HEK293 (cell line): ENCODE measurements at regions of chr2 and their contacts with region 1.

Region 1: GRCh38 chr2:96554293-96555145 is 18.0 kb downstream of the ARID5A start:
- H3K4me3 ChIP-seq: no peak overlapping the region
- H3K27ac ChIP-seq: no peak overlapping the region
- H3K4me1 ChIP-seq: no peaks in the 10 kb centered on the region
- CTCF ChIP-seq: peak; percentile 92

Region 2: DNA sequence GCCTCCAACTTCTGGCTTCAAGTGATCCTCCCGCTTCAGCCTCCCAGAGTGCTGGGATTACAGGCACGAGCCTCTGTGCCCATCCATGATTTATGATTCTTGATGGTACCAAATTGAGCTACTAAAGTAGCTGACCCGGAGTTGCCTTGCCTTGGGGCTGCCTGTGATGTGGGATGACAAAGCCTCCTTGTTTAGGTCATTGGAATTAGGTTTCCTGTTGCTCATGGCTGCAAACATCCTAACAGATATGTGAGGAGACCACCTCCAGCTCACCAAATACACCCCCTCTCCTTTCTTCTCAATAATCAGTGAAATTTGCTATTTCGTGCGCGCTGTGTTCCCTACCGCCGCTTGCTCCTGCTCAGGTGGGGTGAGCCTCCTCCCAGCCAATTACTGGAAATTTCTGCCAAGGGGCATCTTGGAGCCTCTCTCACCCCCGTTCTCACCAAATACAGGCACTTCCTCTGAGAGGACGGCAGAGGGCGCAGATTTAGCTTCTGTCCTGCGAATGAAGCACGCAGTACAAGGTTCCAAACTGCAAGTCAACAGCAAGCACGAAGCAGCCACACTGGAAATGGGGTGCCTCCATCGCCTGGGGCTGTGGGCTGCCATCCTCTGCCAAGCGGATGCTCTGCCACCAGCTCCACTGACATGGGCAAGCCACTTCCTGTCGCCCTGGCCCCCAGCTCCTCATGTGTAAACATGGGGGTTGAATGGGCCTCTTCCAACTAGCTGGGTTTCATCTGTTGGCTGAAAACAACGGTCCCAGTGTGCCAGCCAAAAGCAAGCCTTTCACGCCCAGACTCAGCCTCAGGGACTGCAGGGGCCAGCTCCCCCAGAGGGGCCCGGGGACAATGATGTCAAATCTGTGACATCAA is 147.2 kb before region 1 on chr2:
- CTCF ChIA-PET with region 1: interaction called, 26 read pairs
- POLR2A ChIA-PET with region 1: interaction called, 5 read pairs
- H3K4me3 ChIP-seq: no peak overlapping the region
- H3K27ac ChIP-seq: no peak overlapping the region
- H3K4me1 ChIP-seq: peaks cover 8% of the 10 kb centered on the region
- CTCF ChIP-seq: peak; percentile 80

Region 3: GRCh38 chr2:96531872-96532704 is 22.4 kb before region 1 on chr2:
- CTCF ChIA-PET with region 1: interaction called, 27 read pairs
- POLR2A ChIA-PET with region 1: no interaction called
- H3K4me3 ChIP-seq: peak overlapping the region; percentile 33
- H3K27ac ChIP-seq: peak overlapping the region; percentile 63
- H3K4me1 ChIP-seq: peaks cover 36% of the 10 kb centered on the region
- CTCF ChIP-seq: peak; percentile 51; the same call in 1 of the 2 replicates

Region 4: GRCh38 chr2:96538487-96539214 is 15.9 kb before region 1 on chr2:
- CTCF ChIA-PET with region 1: interaction called, 27 read pairs
- POLR2A ChIA-PET with region 1: interaction called, 6 read pairs
- H3K4me3 ChIP-seq: no peak overlapping the region
- H3K27ac ChIP-seq: no peak overlapping the region
- H3K4me1 ChIP-seq: peaks cover 14% of the 10 kb centered on the region
- CTCF ChIP-seq: no peak